MCF 10A (cell line): ENCODE measurements at regions of chr10 and their contacts with region 1.

Region 1: DNA sequence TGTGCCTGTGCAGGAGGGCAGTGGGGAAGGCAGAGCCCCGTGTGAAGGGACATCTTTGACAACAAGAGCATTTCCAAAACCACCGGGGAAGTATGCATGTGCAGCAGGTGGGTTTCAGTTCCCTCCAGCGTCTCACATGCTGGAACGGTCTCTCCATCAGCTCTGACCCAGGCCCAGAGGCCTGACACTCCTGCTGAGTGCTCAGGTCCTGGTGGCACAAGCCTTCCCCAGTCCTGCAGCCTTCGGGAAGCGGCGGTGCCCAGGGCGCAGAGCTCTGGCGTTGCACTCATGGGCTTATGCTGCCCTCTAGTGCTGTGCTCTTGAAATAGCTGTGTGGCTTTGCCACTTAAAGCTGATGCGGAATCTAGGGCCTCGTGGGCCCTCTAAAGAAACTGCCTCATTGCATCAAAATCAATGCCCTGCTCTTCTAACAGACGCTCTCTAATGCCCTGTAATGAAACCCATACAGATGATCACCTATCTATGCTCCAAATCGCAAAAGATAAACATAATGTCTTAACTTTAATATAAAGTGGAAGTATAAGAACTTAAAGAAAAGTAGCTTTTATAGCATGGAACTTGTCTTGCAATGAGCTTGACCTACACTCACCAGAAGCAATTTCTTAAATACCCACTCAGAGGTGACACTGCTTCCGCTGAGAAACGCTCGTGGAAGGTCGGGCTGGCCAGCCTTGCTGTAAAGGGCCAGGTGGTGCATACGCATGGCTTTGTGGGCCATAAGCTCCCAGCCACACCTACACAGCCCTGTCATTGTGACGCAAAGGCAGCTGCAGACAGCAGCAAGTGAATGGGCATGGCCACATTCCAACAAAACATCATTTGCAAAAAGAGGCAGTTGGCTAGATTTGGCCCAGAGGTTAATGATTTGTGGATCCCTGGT is 38.6 kb downstream of the CLRN3 start:
- DNase-seq: peak; percentile 67
- H3K4me3 Mint-ChIP-seq: no peak overlapping the region
- H3K27ac Mint-ChIP-seq: no peak overlapping the region
- H3K4me1 Mint-ChIP-seq: no peaks in the 10 kb centered on the region
- H3K27me3 Mint-ChIP-seq: peaks cover 20% of the 10 kb centered on the region
- CTCF ChIP-seq: peak; percentile 78

Region 2: GRCh38 chr10:127702271-127702670 is 151.8 kb before region 1 on chr10:
- CTCF ChIA-PET with region 1: interaction called, 13 read pairs
- POLR2A ChIA-PET with region 1: no interaction called
- intact Hi-C with region 1: no loop called
- DNase-seq: no peak
- H3K4me3 Mint-ChIP-seq: no peak overlapping the region
- H3K27ac Mint-ChIP-seq: no peak overlapping the region
- H3K4me1 Mint-ChIP-seq: no peaks in the 10 kb centered on the region
- H3K27me3 Mint-ChIP-seq: peaks cover 68% of the 10 kb centered on the region
- CTCF ChIP-seq: no peak

Region 3: GRCh38 chr10:127836966-127837365 is 17.2 kb before region 1 on chr10:
- CTCF ChIA-PET with region 1: interaction called, 42 read pairs
- POLR2A ChIA-PET with region 1: no interaction called
- intact Hi-C with region 1: no loop called
- DNase-seq: no peak
- H3K4me3 Mint-ChIP-seq: no peak overlapping the region
- H3K27ac Mint-ChIP-seq: no peak overlapping the region
- H3K4me1 Mint-ChIP-seq: peaks cover 8% of the 10 kb centered on the region
- H3K27me3 Mint-ChIP-seq: peaks cover 17% of the 10 kb centered on the region
- CTCF ChIP-seq: no peak

Region 4: GRCh38 chr10:127947208-127947607 is 93.1 kb after region 1 on chr10:
- CTCF ChIA-PET with region 1: no interaction called
- POLR2A ChIA-PET with region 1: no interaction called
- intact Hi-C with region 1: no loop called
- DNase-seq: peak; percentile 60
- H3K4me3 Mint-ChIP-seq: no peak overlapping the region
- H3K27ac Mint-ChIP-seq: no peak overlapping the region
- H3K4me1 Mint-ChIP-seq: peaks cover 50% of the 10 kb centered on the region
- H3K27me3 Mint-ChIP-seq: no peaks in the 10 kb centered on the region
- CTCF ChIP-seq: no peak